CD8-positive, alpha-beta T cell (primary cell): ENCODE measurements at regions of chr17 and their contacts with region 1.

Region 1: GRCh38 chr17:81018044-81018802 is 16.7 kb upstream of the BAIAP2 start:
- DNase-seq: peak in 7 of 9 experiments; percentile 23 to 74 (median 50)
- ATAC-seq: peak; percentile 79
- H3K4me3 ChIP-seq: peak overlapping the region; percentile 56 to 62
- H3K4me3 Mint-ChIP-seq: peak overlapping the region; percentile 78
- H3K27ac ChIP-seq: peak overlapping the region; percentile 53 to 87
- H3K27ac Mint-ChIP-seq: peak overlapping the region; percentile 94
- H3K4me1 ChIP-seq: peaks cover 24% of the 10 kb centered on the region
- H3K4me1 Mint-ChIP-seq: peaks cover 32% of the 10 kb centered on the region
- H3K27me3 ChIP-seq: no peaks in the 10 kb centered on the region
- H3K27me3 Mint-ChIP-seq: no peaks in the 10 kb centered on the region
- CTCF ChIP-seq: no peak

Region 2: GRCh38 chr17:81003711-81004475 is 14.3 kb before region 1 on chr17:
- CTCF ChIA-PET with region 1: interaction called, 25 read pairs
- POLR2A ChIA-PET with region 1: interaction called, 10 read pairs
- intact Hi-C with region 1: no loop called
- DNase-seq: peak in 2 of 9 experiments; percentile 20 to 28
- ATAC-seq: peak; percentile 19
- H3K4me3 ChIP-seq: peak overlapping the region; percentile 6 to 52
- H3K4me3 Mint-ChIP-seq: peak overlapping the region; percentile 70
- H3K27ac ChIP-seq: no peak overlapping the region
- H3K27ac Mint-ChIP-seq: no peak overlapping the region
- H3K4me1 ChIP-seq: peaks cover 14% of the 10 kb centered on the region
- H3K4me1 Mint-ChIP-seq: peaks cover 18% of the 10 kb centered on the region
- H3K27me3 ChIP-seq: peaks cover 4 to 16% of the 10 kb centered on the region in 2 experiments
- H3K27me3 Mint-ChIP-seq: peaks cover 16% of the 10 kb centered on the region
- CTCF ChIP-seq: no peak